Right ventricle myocardium inferior (tissue), 1 donor: ENCODE measurements at regions of chr13 and their contacts with region 1.

Region 1: GRCh38 chr13:27424246-27425157 is at the start of gene GTF3A:
- DNase-seq: peak; percentile 93
- ATAC-seq: peak; percentile 95
- total RNA-seq, gene GTF3A: 235 TPM

Region 2: GRCh38 chr13:27321468-27322431 is 102.8 kb before region 1 on chr13:
- intact Hi-C with region 1: no loop called
- DNase-seq: no peak
- ATAC-seq: no peak

Region 3: DNA sequence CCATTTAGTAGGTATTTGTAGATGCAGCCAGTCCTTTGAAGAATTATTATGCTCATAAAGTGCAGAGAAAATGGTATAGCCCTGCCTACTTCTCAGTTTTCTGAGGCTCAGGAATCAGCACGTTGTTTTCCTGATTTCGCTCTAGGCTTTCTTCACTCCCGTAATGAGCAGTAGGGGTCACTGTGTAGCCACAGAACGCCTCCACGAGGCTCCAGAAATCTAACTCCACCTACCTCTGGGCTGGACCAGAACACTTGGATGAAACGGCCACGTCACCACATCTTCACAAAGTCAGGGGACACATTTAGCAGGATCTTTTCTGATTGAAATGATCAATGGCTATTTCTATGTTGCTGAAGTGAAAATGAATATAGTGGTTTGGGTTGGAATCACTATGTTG is 49.9 kb before region 1 on chr13:
- intact Hi-C with region 1: loop called (anchors 1 kb)
- DNase-seq: peak; percentile 49
- ATAC-seq: peak; percentile 90

Region 4: GRCh38 chr13:27461940-27462584 is 37.6 kb after region 1 on chr13:
- intact Hi-C with region 1: no loop called
- DNase-seq: no peak
- ATAC-seq: peak; percentile 75

Region 5: GRCh38 chr13:27712421-27712820 is 287.9 kb after region 1 on chr13:
- intact Hi-C with region 1: no loop called
- DNase-seq: no peak
- ATAC-seq: no peak